Panc1 (cell line): ENCODE measurements at regions of chr3 and their contacts with region 1.

Region 1: GRCh38 chr3:40476478-40477470 is at the start of gene ZNF619:
- DNase-seq: no peak
- ATAC-seq: peak; percentile 93
- H3K4me3 ChIP-seq: peak within 1 kb of the TSS; percentile 60 to 65
- H3K27ac ChIP-seq: peak within 1 kb of the TSS; percentile 83
- H3K4me1 ChIP-seq: no peaks in the 10 kb centered on the region; the same call in 1 of the 2 replicates
- H3K27me3 ChIP-seq: no peaks in the 10 kb centered on the region
- CTCF ChIP-seq: no peak
- total RNA-seq, gene ZNF619: 1.3 TPM

Region 2: DNA sequence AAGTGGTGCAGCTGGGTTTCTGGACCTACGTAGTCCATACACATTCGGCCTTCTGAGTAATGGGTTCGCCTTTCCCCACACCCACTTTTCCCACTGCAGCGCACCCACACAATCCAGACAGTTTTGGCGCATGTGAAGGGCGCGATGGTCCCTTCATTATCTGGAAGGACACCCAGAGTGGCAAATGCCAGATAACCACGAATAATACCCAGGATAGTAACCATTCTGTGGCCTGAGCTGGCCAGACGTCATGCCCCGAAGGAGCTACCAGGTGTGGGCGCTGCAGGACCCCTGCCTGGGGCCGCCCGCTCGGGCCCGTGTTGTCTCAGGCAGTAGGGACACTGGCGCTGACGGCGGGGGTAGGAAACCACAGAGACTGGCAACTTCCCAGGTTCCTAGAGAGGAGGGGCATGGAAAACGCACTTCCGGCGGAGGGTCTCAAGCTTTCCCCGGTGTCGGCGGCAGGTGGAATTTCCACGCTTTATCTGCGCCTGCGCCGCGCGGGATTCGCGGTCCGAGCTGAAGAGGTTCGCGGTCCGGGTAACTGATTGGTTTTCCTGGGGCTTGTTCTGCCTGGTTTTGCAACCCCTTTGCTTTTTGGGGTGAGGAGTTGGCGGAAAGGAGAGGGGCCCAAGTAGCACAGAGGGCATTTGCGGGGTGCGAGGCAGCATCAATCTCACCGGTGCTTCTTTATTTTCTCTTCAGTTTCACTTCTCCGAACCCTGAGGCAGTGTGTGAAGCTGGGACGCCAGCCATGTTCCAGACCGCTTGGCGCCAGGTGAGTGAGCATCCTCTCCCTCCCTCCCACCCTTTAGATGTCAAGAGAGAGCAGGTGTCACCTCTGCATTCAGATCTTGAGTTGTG is 29.1 kb after region 1 on chr3 and contains the start of gene ZNF620:
- CTCF ChIA-PET with region 1: no interaction called
- POLR2A ChIA-PET with region 1: interaction called, 10 read pairs
- in situ Hi-C with region 1: no loop called
- intact Hi-C with region 1: no loop called
- DNase-seq: no peak
- ATAC-seq: peak; percentile 89
- H3K4me3 ChIP-seq: peak within 1 kb of the TSS; percentile 62 to 67
- H3K27ac ChIP-seq: peak within 1 kb of the TSS; percentile 49
- H3K4me1 ChIP-seq: no peaks in the 10 kb centered on the region; the same call in 1 of the 2 replicates
- H3K27me3 ChIP-seq: no peaks in the 10 kb centered on the region
- CTCF ChIP-seq: peak; percentile 53
- total RNA-seq, gene ZNF620: 1.3 TPM